Activated CD4-positive, alpha-beta memory T cell treated with anti-CD3 and anti-CD28 coated beads for 36 hours (primary cell): ENCODE measurements at regions of chr15 and their contacts with region 1.

Region 1: DNA sequence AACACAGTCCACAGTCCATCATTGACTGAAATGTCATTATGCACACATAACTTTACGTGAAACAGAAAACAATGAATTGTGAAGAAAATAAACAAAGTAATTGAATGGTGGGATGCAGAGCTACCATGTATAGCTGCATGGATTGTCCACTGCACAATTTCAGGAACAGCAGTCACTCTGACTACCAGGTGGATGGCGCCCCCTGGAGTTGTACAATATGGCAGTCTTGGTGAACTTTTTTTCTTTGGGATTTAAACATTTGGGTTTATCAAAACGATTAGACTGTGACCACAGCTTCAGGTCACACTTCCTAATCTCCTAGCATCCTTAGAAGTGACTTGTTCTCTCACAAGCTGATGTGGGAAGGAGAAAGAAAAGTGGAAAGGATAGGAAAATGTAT is 48.9 kb upstream of the TCF12 start:
- DNase-seq: peak; percentile 65
- H3K4me3 Mint-ChIP-seq: no peak overlapping the region
- H3K27ac Mint-ChIP-seq: no peak overlapping the region
- H3K4me1 Mint-ChIP-seq: no peaks in the 10 kb centered on the region
- H3K27me3 Mint-ChIP-seq: no peaks in the 10 kb centered on the region

Region 2: DNA sequence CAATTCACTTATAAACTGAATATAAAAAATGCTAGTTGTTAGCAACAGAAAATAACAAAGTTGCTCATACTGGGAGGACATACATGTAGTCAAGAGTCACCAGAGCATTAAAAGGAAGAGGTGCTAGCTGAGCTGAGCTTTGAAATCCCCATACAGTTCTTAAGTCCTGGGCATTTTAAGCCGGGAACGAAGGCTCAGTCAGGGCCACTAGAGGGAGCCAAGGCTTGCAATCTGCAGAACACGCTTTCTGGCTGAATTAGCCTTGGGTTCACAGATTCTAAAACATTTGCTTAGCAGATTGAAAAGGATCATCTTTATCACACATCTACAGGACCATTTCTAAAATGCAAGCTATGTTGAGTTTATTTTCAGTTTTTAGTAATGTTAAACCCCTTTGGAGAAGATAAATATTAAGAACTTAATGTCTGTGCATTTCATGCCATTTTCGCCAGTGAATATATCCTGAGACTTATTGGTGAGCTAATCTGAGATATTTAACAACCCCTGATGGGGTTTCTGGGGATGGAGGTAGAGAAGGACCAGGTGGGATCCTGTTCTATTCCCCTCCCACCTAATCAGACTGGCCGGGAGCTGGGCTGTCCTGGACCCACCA is 378.4 kb before region 1 on chr15:
- CTCF ChIA-PET with region 1: interaction called, 209 read pairs
- POLR2A ChIA-PET with region 1: no interaction called
- intact Hi-C with region 1: loop called (anchors 1 kb)
- DNase-seq: peak; percentile 69
- H3K4me3 Mint-ChIP-seq: no peak overlapping the region
- H3K27ac Mint-ChIP-seq: no peak overlapping the region
- H3K4me1 Mint-ChIP-seq: no peaks in the 10 kb centered on the region
- H3K27me3 Mint-ChIP-seq: peaks cover 2% of the 10 kb centered on the region

Region 3: GRCh38 chr15:56496635-56497034 is 372.9 kb before region 1 on chr15:
- CTCF ChIA-PET with region 1: interaction called, 209 read pairs
- POLR2A ChIA-PET with region 1: no interaction called
- intact Hi-C with region 1: loop called (anchors 1 kb)
- DNase-seq: no peak
- H3K4me3 Mint-ChIP-seq: no peak overlapping the region
- H3K27ac Mint-ChIP-seq: no peak overlapping the region
- H3K4me1 Mint-ChIP-seq: no peaks in the 10 kb centered on the region
- H3K27me3 Mint-ChIP-seq: peaks cover 10% of the 10 kb centered on the region

Region 4: GRCh38 chr15:56821721-56822425 is 47.7 kb before region 1 on chr15:
- CTCF ChIA-PET with region 1: interaction called, 11 read pairs
- POLR2A ChIA-PET with region 1: no interaction called
- intact Hi-C with region 1: no loop called
- DNase-seq: peak; percentile 53
- H3K4me3 Mint-ChIP-seq: no peak overlapping the region
- H3K27ac Mint-ChIP-seq: no peak overlapping the region
- H3K4me1 Mint-ChIP-seq: no peaks in the 10 kb centered on the region
- H3K27me3 Mint-ChIP-seq: no peaks in the 10 kb centered on the region